Dendritic cell treated with granulocyte-macrophage colony-stimulating factor and Interleukin-4, amounts not matched to agents 40 ng/mL and 50 ng/mL, for 4 days (primary cell): ENCODE measurements at regions of chr6 and their contacts with region 1.

Region 1: GRCh38 chr6:132962936-132963868 is 148.8 kb downstream of the RPS12 start:
- H3K4me3 Mint-ChIP-seq: no peak overlapping the region
- H3K27ac Mint-ChIP-seq: no peak overlapping the region
- H3K4me1 Mint-ChIP-seq: peaks cover 13% of the 10 kb centered on the region
- H3K27me3 Mint-ChIP-seq: peaks cover 7% of the 10 kb centered on the region

Region 2: GRCh38 chr6:132651062-132651461 is 312.1 kb before region 1 on chr6:
- intact Hi-C with region 1: loop called (anchors 10 kb)
- H3K4me3 Mint-ChIP-seq: no peak overlapping the region
- H3K27ac Mint-ChIP-seq: no peak overlapping the region
- H3K4me1 Mint-ChIP-seq: peaks cover 5% of the 10 kb centered on the region
- H3K27me3 Mint-ChIP-seq: no peaks in the 10 kb centered on the region

Region 3: DNA sequence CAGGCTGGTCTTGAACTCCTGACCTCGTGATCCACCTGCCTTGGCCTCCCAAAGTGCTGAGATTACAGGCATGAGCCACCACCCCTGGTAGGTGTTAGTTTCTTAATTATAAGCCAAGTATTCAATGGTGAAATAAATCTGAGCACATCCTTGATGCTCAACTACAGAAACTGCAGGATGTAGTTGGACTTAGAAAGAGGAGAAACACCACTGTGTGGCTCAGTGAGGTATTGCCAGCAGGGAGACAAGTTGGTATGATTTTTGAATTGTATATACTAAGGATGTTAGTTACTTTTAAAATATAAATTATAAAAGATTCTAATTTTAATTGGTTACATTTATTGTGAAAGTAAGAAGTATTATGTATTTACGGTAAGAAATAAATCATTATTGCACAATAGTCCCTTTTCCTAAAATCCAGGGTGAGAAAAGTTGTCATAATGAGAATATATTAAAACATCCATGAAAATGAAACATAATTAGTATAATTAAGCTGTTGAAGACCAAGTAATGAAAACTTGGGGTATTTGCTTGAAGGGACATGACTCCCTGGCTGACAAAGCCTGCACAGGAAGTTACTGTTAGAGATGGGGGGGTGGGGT is 182.3 kb before region 1 on chr6:
- intact Hi-C with region 1: no loop called
- H3K4me3 Mint-ChIP-seq: no peak overlapping the region
- H3K27ac Mint-ChIP-seq: no peak overlapping the region
- H3K4me1 Mint-ChIP-seq: no peaks in the 10 kb centered on the region
- H3K27me3 Mint-ChIP-seq: no peaks in the 10 kb centered on the region